CD4-positive, alpha-beta T cell (primary cell): ENCODE measurements at regions of chr15 and their contacts with region 1.

Region 1: GRCh38 chr15:65133548-65134200 is at the start of gene PDCD7:
- DNase-seq: peak; percentile 68 to 95 (median 78)
- ATAC-seq: peak; percentile 95
- H3K4me3 ChIP-seq: peak within 1 kb of the TSS; percentile 66
- H3K4me3 Mint-ChIP-seq: peak within 1 kb of the TSS; percentile 95
- H3K27ac ChIP-seq: peak within 1 kb of the TSS; percentile 73 to 87
- H3K27ac Mint-ChIP-seq: peak within 1 kb of the TSS; percentile 92
- H3K4me1 ChIP-seq: peaks cover 26% of the 10 kb centered on the region
- H3K4me1 Mint-ChIP-seq: peaks cover 32% of the 10 kb centered on the region
- H3K27me3 ChIP-seq: no peaks in the 10 kb centered on the region
- H3K27me3 Mint-ChIP-seq: no peaks in the 10 kb centered on the region
- CTCF ChIP-seq: no peak
- total RNA-seq, gene PDCD7: 15.6 to 17.7 TPM

Region 2: DNA sequence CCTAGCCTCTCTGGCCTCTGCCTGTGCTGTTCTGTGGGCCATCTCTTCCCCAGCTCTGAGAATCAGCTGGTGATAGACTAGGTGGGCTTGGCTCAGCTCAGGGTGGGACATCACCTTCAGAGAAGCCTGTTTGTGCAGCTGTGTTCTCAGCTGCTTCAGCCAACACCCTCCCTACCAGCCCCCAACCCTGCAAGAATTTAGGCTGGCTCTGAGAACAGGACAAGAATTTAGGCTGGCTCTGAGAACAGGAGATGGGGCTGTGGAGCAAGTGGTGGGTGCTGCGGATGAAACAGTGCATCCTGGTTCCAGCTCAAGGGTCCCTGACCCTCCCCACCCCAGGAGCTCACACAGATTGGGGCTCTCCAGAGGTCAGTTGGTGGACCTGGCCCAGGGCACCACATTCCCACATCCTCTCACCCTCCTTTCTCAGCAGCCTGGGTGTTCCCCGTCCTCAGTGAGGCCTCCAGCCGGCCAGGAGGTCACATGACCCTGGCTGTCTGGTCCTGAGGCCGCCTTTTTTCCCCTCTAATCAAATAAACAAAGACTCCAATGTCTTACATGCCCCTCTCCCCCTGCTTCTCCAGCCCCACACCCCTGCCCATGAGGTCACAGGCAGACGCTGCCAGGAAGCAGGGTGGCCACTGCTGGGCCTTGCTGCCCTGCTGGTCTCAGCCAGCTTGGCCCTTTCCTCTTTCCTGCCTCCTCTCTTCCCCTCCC is 277.1 kb before region 1 on chr15:
- CTCF ChIA-PET with region 1: no interaction called
- POLR2A ChIA-PET with region 1: no interaction called
- intact Hi-C with region 1: no loop called
- DNase-seq: no peak
- ATAC-seq: no peak
- H3K4me3 ChIP-seq: no peak overlapping the region
- H3K4me3 Mint-ChIP-seq: no peak overlapping the region
- H3K27ac ChIP-seq: no peak overlapping the region
- H3K27ac Mint-ChIP-seq: peak overlapping the region; percentile 68
- H3K4me1 ChIP-seq: peaks cover 63% of the 10 kb centered on the region
- H3K4me1 Mint-ChIP-seq: peaks cover 52% of the 10 kb centered on the region
- H3K27me3 ChIP-seq: no peaks in the 10 kb centered on the region
- H3K27me3 Mint-ChIP-seq: no peaks in the 10 kb centered on the region
- CTCF ChIP-seq: no peak

Region 3: DNA sequence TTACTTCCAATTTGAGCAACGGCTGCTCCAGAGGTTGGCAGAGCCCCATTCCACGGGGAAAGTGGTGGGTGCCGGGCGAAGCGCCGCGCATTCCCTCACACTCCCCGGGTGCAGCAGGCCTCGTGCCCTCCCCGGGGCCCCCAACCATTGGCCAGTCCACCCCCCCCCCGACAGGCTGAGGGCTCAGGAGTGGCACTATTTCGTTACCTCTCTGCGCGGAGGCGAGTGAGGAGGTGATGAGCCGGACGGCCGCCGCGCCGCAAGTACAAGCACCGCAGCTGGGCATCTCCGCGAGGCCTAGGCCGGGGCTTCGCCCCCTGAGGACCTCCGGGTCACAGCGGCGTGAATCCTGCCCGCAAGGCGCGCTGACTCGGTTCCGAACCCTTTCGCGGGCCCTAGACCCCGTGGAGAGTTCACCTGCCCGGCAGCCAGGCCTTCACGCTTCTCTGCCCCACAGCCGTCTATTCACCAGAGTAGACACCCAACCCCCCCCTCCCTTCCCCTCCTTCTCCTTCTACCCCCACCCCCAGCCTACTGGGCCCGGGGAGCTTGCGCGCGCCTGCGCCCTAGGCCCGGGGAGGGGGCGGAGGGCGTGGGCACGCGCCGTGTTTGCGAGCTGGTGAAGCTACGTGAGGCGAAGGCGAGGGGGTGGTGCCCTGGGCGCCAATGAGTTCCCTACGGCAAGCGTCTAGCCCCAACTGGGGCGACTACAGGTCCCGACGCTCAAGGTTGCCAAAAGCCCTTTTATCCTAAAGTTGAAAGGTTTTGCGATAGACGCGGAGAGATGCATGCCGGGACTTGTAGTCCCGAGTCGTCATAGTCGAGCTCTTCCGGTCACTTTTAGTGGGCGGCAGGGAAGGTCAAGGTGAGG is 51.4 kb after region 1 on chr15 and contains the start of gene CLPX:
- CTCF ChIA-PET with region 1: interaction called, 3 read pairs
- POLR2A ChIA-PET with region 1: interaction called, 18 read pairs
- intact Hi-C with region 1: loop called (anchors 2 kb)
- DNase-seq: peak; percentile 84 to 99 (median 90)
- ATAC-seq: peak; percentile 97
- H3K4me3 ChIP-seq: peak within 1 kb of the TSS; percentile 91
- H3K4me3 Mint-ChIP-seq: peak within 1 kb of the TSS; percentile 94
- H3K27ac ChIP-seq: peak within 1 kb of the TSS; percentile 82 to 86
- H3K27ac Mint-ChIP-seq: peak within 1 kb of the TSS; percentile 85
- H3K4me1 ChIP-seq: peaks cover 29% of the 10 kb centered on the region
- H3K4me1 Mint-ChIP-seq: peaks cover 33% of the 10 kb centered on the region
- H3K27me3 ChIP-seq: no peaks in the 10 kb centered on the region
- H3K27me3 Mint-ChIP-seq: no peaks in the 10 kb centered on the region
- CTCF ChIP-seq: no peak
- total RNA-seq, gene CLPX: 29.1 to 36.3 TPM